Psoas muscle (tissue), 8 donors: ENCODE measurements at regions of chr9 and their contacts with region 1.

Region 1: DNA sequence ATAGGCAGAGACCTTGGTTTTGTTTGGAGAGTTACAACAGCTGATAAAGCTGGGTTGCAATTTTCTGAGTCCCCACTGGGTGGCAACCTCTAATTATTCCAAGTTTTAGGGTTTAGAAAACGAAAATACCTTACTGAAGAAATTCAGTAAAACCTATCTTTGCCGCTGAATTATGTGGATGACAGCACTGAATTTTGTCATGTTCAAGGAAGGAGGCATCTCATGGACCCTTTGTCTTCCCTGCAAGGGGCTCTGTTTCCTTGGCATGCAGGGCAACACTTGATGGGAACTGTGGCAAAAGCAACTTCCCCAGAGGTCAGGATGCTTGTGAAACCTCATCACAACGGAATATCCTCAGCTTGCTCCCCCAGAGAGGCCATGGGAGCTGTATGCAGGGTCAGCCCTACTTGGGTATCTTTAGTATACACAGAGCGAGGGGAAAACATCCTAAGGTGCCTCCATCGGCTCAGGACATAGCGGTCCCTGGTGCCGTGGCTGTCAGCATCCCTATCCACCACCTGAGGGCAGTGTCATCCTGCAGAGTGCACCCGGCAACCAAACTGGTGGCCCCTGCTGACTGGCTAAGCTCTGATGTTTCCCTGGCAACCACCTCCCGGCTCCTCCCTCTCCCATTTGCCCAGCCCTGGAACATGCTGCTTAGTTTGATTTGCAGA is 123.1 kb downstream of the RXRA start:
- DNase-seq: peak; percentile 90 to 94
- ATAC-seq: peak; percentile 88 to 93 (median 92)
- H3K4me3 ChIP-seq: no peak overlapping the region
- H3K27ac ChIP-seq: no peak overlapping the region
- H3K4me1 ChIP-seq: no peaks in the 10 kb centered on the region
- H3K27me3 ChIP-seq: no peaks in the 10 kb centered on the region
- CTCF ChIP-seq: peak; percentile 82

Region 2: DNA sequence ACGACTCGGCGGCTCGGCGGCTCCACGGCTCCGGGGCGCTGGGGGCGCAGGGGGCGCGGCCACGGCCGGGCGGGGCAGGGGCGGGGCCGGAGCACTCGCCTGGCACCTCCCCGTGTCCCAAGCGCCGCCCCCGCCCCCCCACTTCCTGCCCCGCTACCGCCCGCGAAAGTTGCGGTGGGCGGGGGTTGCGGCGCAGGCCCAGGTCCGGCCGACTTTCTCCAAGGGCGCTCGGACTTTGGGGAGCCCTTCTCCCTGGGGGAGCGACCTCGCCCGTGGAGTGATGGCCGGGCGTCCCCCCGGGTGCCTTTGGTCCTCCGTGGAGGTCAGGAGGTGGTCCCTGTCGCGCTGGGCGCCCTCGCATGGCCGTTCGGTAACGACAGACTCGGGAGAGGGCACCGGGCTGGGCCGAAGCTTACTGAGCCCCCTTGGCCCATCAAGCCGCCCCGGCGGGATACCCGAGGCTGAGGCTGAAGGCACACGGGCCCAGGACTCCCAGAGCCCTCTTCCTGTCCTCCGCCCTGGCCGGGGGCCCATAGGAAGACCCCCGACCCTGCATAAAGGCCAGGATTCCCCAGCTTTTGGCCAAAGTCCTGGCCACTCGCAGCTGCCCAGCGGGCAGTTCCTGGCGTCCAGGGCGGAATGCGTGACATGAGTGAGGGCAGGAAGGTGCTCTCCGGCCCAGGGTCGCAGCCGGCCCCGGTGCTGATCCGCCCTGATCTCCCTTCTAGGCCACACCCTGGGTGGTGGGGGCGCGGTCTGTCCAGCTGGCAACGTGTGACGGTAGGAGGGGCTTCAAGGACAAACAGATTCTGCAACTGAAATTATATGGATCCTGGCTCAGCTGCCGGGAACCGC is 456.4 kb before region 1 on chr9:
- intact Hi-C with region 1: no loop called
- DNase-seq: peak; percentile 88 to 89
- ATAC-seq: peak; percentile 52 to 83 (median 74)
- H3K4me3 ChIP-seq: peak overlapping the region; percentile 64
- H3K27ac ChIP-seq: peak overlapping the region; percentile 63
- H3K4me1 ChIP-seq: peaks cover 4% of the 10 kb centered on the region
- H3K27me3 ChIP-seq: peaks cover 0 to 65% (median 6%) of the 10 kb centered on the region in 3 donors
- CTCF ChIP-seq: peak; percentile 11

Region 3: GRCh38 chr9:134283111-134283515 is 166.2 kb before region 1 on chr9:
- intact Hi-C with region 1: loop called in 1 of 2 experiments (anchors 5 kb)
- DNase-seq: peak; percentile 76 to 89
- ATAC-seq: peak; percentile 53 to 81 (median 68)
- H3K4me3 ChIP-seq: peak overlapping the region; percentile 28
- H3K27ac ChIP-seq: peak overlapping the region; percentile 36
- H3K4me1 ChIP-seq: peaks cover 22% of the 10 kb centered on the region
- H3K27me3 ChIP-seq: no peaks in the 10 kb centered on the region
- CTCF ChIP-seq: no peak